CD8-positive, alpha-beta T cell (primary cell): ENCODE measurements at regions of chr10 and their contacts with region 1.

Region 1: GRCh38 chr10:90862908-90863514 is 5.2 kb upstream of the HTR7 start:
- DNase-seq: peak in 2 of 9 experiments; percentile 30 to 43
- ATAC-seq: no peak
- H3K4me3 ChIP-seq: no peak overlapping the region
- H3K4me3 Mint-ChIP-seq: no peak overlapping the region
- H3K27ac ChIP-seq: no peak overlapping the region
- H3K27ac Mint-ChIP-seq: no peak overlapping the region
- H3K4me1 ChIP-seq: no peaks in the 10 kb centered on the region
- H3K4me1 Mint-ChIP-seq: peaks cover 4% of the 10 kb centered on the region
- H3K27me3 ChIP-seq: peaks cover 0 to 2% of the 10 kb centered on the region in 2 experiments
- H3K27me3 Mint-ChIP-seq: peaks cover 36% of the 10 kb centered on the region
- CTCF ChIP-seq: peak; percentile 56

Region 2: DNA sequence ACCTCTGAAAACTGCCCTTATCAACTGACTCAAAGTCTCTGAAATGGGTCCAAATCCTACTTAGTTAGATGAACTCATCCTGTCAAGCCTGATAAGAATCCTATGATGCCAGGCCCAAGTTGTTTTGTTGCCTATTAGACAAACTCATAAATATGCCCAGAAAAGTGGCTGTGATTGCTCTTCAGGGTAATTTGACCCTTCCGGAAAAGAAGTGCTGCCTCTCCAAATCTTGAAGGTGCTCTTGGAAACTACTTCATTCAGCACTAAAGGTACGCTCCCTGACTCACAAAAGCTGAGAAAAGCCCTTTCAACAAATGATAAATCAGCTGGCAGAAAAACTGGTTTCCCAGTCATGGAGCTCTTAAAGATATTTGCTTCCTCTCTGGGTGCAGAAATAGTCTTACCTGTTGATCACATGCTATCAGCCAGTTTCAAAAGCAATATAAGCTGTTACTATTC is 1442.0 kb before region 1 on chr10:
- CTCF ChIA-PET with region 1: no interaction called
- POLR2A ChIA-PET with region 1: no interaction called
- intact Hi-C with region 1: loop called (anchors 5 to 10 kb)
- DNase-seq: no peak
- ATAC-seq: no peak
- H3K4me3 ChIP-seq: no peak overlapping the region
- H3K4me3 Mint-ChIP-seq: no peak overlapping the region
- H3K27ac ChIP-seq: no peak overlapping the region
- H3K27ac Mint-ChIP-seq: peak overlapping the region; percentile 62
- H3K4me1 ChIP-seq: peaks cover 30% of the 10 kb centered on the region
- H3K4me1 Mint-ChIP-seq: peaks cover 33% of the 10 kb centered on the region
- H3K27me3 ChIP-seq: no peaks in the 10 kb centered on the region
- H3K27me3 Mint-ChIP-seq: no peaks in the 10 kb centered on the region
- CTCF ChIP-seq: no peak

Region 3: GRCh38 chr10:89793649-89794254 is 1069.3 kb before region 1 on chr10:
- CTCF ChIA-PET with region 1: interaction called, 3 read pairs
- POLR2A ChIA-PET with region 1: no interaction called
- intact Hi-C with region 1: loop called in 1 of 2 experiments (anchors 2 kb)
- DNase-seq: peak in 5 of 9 experiments; percentile 14 to 74 (median 27)
- ATAC-seq: peak; percentile 61
- H3K4me3 ChIP-seq: no peak overlapping the region
- H3K4me3 Mint-ChIP-seq: no peak overlapping the region
- H3K27ac ChIP-seq: no peak overlapping the region
- H3K27ac Mint-ChIP-seq: no peak overlapping the region
- H3K4me1 ChIP-seq: no peaks in the 10 kb centered on the region
- H3K4me1 Mint-ChIP-seq: no peaks in the 10 kb centered on the region
- H3K27me3 ChIP-seq: no peaks in the 10 kb centered on the region
- H3K27me3 Mint-ChIP-seq: peaks cover 14% of the 10 kb centered on the region
- CTCF ChIP-seq: peak; percentile 78

Region 4: GRCh38 chr10:90751107-90751997 is 111.7 kb before region 1 on chr10:
- CTCF ChIA-PET with region 1: interaction called, 3 read pairs
- POLR2A ChIA-PET with region 1: no interaction called
- intact Hi-C with region 1: loop called (anchors 1 kb)
- DNase-seq: peak in 4 of 9 experiments; percentile 28 to 55 (median 38)
- ATAC-seq: peak; percentile 42
- H3K4me3 ChIP-seq: no peak overlapping the region
- H3K4me3 Mint-ChIP-seq: no peak overlapping the region
- H3K27ac ChIP-seq: no peak overlapping the region
- H3K27ac Mint-ChIP-seq: no peak overlapping the region
- H3K4me1 ChIP-seq: no peaks in the 10 kb centered on the region
- H3K4me1 Mint-ChIP-seq: no peaks in the 10 kb centered on the region
- H3K27me3 ChIP-seq: no peaks in the 10 kb centered on the region
- H3K27me3 Mint-ChIP-seq: peaks cover 27% of the 10 kb centered on the region
- CTCF ChIP-seq: peak; percentile 32

Region 5: GRCh38 chr10:90879062-90879461 is 16.1 kb after region 1 on chr10:
- CTCF ChIA-PET with region 1: interaction called, 10 read pairs
- POLR2A ChIA-PET with region 1: no interaction called
- intact Hi-C with region 1: no loop called
- DNase-seq: no peak
- ATAC-seq: no peak
- H3K4me3 ChIP-seq: no peak overlapping the region
- H3K4me3 Mint-ChIP-seq: no peak overlapping the region
- H3K27ac ChIP-seq: no peak overlapping the region
- H3K27ac Mint-ChIP-seq: no peak overlapping the region
- H3K4me1 ChIP-seq: no peaks in the 10 kb centered on the region
- H3K4me1 Mint-ChIP-seq: peaks cover 7% of the 10 kb centered on the region
- H3K27me3 ChIP-seq: no peaks in the 10 kb centered on the region
- H3K27me3 Mint-ChIP-seq: no peaks in the 10 kb centered on the region
- CTCF ChIP-seq: no peak